ENCODE measurements at regions of chr17 and their contacts with region 1.

Region 1: GRCh38 chr17:47066841-47067682 is 88.0 kb upstream of the RPRML start:
- DNase-seq: peak; percentile 94
- H3K4me3 ChIP-seq: peak overlapping the region; percentile 81
- H3K27ac ChIP-seq: peak overlapping the region; percentile 67
- H3K4me1 ChIP-seq: peaks cover 18% of the 10 kb centered on the region
- CTCF ChIP-seq: peak; percentile 42; the same call in 1 of the 2 replicates

Region 2: DNA sequence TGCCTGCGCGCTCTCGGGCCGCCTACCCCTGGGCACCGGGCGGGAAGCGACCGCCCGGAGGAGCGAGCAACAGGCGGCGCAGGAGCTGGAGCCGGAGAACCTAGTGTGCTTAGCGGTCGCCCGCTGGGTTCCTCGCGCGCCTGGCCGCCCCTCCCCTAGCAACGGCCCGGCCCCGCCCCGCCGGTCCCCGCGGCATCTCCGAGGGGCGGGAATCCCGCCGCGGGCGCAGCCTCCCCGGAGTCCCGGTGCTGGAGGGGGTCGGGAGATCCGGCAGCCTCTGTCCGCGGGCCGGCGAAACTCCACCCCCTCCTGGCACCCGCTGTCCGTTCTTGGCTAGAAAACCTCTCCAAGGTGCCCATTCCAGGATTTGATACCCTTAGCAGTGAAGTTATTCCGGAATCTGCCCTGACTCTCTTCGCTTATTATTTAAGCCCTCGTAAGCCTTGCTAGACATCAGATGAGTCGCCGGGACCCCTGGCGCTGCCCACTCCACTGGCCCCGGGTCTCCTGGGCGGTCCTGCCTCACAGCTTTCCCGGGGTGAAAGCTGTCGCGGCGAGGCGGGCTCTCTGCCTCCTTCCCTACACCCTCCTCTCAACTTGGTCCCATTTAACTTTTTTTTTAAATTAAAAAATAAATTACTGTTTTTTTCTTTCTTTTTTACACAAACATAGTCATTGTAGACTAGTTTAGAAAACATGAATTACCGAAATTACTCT is 87.8 kb before region 1 on chr17 and contains the start of gene RPRML:
- CTCF ChIA-PET with region 1: no interaction called
- POLR2A ChIA-PET with region 1: no interaction called
- intact Hi-C with region 1: no loop called
- DNase-seq: peak; percentile 73
- H3K4me3 ChIP-seq: peak within 1 kb of the TSS; percentile 70
- H3K27ac ChIP-seq: peak within 1 kb of the TSS; percentile 19
- H3K4me1 ChIP-seq: peaks cover 46% of the 10 kb centered on the region
- CTCF ChIP-seq: no peak
- total RNA-seq, gene RPRML: 8.8 and 12.8 TPM in 2 replicates

Region 3: GRCh38 chr17:47099987-47100711 is 33.1 kb after region 1 on chr17:
- CTCF ChIA-PET with region 1: no interaction called
- POLR2A ChIA-PET with region 1: no interaction called
- intact Hi-C with region 1: loop called (anchors 2 kb)
- DNase-seq: peak; percentile 91
- H3K4me3 ChIP-seq: peak overlapping the region; percentile 92
- H3K27ac ChIP-seq: peak overlapping the region; percentile 61
- H3K4me1 ChIP-seq: peaks cover 37% of the 10 kb centered on the region
- CTCF ChIP-seq: no peak

Region 4: DNA sequence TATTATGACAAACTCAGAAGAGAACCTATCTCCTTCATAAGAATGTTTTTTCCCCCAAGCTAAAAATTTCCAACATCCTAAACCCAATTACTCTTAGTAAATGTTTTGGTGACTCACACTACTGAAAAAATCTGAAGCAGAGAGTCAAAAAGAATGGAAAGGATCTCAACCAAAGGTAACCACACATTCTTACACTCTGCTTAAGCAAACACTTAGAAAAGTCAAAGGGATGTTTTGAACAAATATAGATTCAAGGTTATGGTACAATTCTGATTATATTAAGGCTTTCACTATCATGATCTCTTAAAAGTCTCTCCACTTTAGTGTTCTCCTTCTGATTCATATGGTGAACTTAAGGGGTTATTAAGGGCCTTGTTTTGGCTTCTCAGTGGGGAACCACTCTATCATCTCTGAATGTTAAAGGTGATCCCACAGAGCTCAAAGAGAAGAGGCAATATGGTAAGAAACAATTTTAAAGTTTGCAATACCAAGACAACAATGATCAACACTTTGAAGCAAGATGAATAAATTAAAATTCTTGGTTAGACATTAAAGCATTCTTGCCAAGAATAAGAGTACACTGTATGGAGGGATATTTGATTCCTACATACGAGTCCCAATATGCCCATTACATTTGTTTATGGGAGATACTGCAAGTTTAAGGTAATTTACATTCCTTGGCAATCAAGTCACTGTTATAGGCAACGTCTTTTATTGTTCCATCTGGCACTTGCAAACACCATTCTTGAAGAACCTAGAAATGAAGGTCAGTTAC is 52.9 kb after region 1 on chr17:
- CTCF ChIA-PET with region 1: no interaction called
- POLR2A ChIA-PET with region 1: no interaction called
- intact Hi-C with region 1: no loop called
- DNase-seq: no peak
- H3K4me3 ChIP-seq: no peak overlapping the region
- H3K27ac ChIP-seq: no peak overlapping the region
- H3K4me1 ChIP-seq: no peaks in the 10 kb centered on the region
- CTCF ChIP-seq: no peak